Esophagus muscularis mucosa (tissue), 4 donors: ENCODE measurements at regions of chr20 and their contacts with region 1.

Region 1: GRCh38 chr20:39042279-39043150 is 80.4 kb downstream of the DHX35 start:
- DNase-seq: no peak
- H3K4me3 ChIP-seq: no peak overlapping the region
- H3K27ac ChIP-seq: peak overlapping the region; percentile 68 to 90 (median 88)
- H3K4me1 ChIP-seq: peaks cover 0 to 36% (median 20%) of the 10 kb centered on the region in 4 donors
- H3K27me3 ChIP-seq: no peaks in the 10 kb centered on the region
- CTCF ChIP-seq: no peak
- EP300 ChIP-seq: peak; percentile 41
- POLR2A ChIP-seq: no peak

Region 2: GRCh38 chr20:38965264-38965663 is 77.3 kb before region 1 on chr20:
- intact Hi-C with region 1: loop called (anchors 2 kb)
- DNase-seq: no peak
- H3K4me3 ChIP-seq: no peak overlapping the region
- H3K27ac ChIP-seq: peak overlapping the region; percentile 14 to 98 (median 85)
- H3K4me1 ChIP-seq: peaks cover 20 to 67% (median 61%) of the 10 kb centered on the region in 4 donors
- H3K27me3 ChIP-seq: peaks cover 0 to 2% (median 0%) of the 10 kb centered on the region in 4 donors
- CTCF ChIP-seq: no peak
- EP300 ChIP-seq: no peak
- POLR2A ChIP-seq: no peak

Region 3: GRCh38 chr20:39195582-39196021 is 153.1 kb after region 1 on chr20:
- intact Hi-C with region 1: no loop called
- DNase-seq: no peak
- H3K4me3 ChIP-seq: no peak overlapping the region
- H3K27ac ChIP-seq: no peak overlapping the region
- H3K4me1 ChIP-seq: no peaks in the 10 kb centered on the region
- H3K27me3 ChIP-seq: peaks cover 0 to 18% (median 0%) of the 10 kb centered on the region in 4 donors
- CTCF ChIP-seq: no peak
- EP300 ChIP-seq: no peak
- POLR2A ChIP-seq: no peak